ENCODE measurements at regions of chr12 and their contacts with region 1.

Region 1: DNA sequence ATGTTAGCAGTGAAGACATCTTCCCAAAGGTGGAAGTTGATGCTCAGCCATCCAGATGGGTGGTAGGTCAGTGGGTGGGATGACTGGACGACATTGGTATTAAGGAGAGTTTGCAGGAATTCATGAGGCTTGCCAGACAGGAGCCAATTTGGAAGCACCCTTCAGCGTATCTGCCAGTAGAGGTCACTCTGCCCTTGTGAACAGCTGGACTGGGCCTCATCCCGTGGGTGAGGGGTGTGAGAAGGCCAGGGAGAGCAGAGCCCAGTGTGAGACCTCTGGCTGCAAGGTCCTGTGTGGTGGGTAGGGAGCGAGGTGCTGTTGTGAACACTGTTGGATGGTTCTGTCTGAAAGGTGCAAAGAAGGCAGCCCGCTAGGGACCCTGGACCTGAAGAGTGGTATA is 37.7 kb downstream of the SLC5A8 start:
- DNase-seq: peak; percentile 23
- ATAC-seq: peak; percentile 84
- H3K4me3 ChIP-seq: no peak overlapping the region
- H3K27ac ChIP-seq: no peak overlapping the region
- H3K4me1 ChIP-seq: no peaks in the 10 kb centered on the region
- H3K27me3 ChIP-seq: no peaks in the 10 kb centered on the region
- CTCF ChIP-seq: peak; percentile 64
- EP300 ChIP-seq: no peak
- POLR2A ChIP-seq: no peak
- RAD21 ChIP-seq: no peak

Region 2: GRCh38 chr12:101323255-101323654 is 150.9 kb after region 1 on chr12:
- CTCF ChIA-PET with region 1: no interaction called
- POLR2A ChIA-PET with region 1: no interaction called
- in situ Hi-C with region 1: no loop called
- intact Hi-C with region 1: loop called (anchors 1 kb)
- DNase-seq: no peak
- ATAC-seq: no peak
- H3K4me3 ChIP-seq: no peak overlapping the region
- H3K27ac ChIP-seq: no peak overlapping the region
- H3K4me1 ChIP-seq: no peaks in the 10 kb centered on the region
- H3K27me3 ChIP-seq: no peaks in the 10 kb centered on the region
- CTCF ChIP-seq: no peak
- EP300 ChIP-seq: no peak
- POLR2A ChIP-seq: no peak
- RAD21 ChIP-seq: no peak